ENCODE measurements at regions of chr13 and their contacts with region 1.

Region 1: GRCh38 chr13:102197193-102197592 is 204.7 kb downstream of the FGF14 start:
- DNase-seq: no peak
- ATAC-seq: peak; percentile 31

Region 2: GRCh38 chr13:102251817-102252216 is 54.6 kb after region 1 on chr13:
- intact Hi-C with region 1: no loop called
- DNase-seq: no peak
- ATAC-seq: no peak

Region 3: GRCh38 chr13:102460801-102461200 is 263.6 kb after region 1 on chr13:
- intact Hi-C with region 1: loop called (anchors 5 kb)
- DNase-seq: no peak
- ATAC-seq: no peak

Measured in left ventricle myocardium superior (tissue), 1 donor.